Calu3 (cell line): ENCODE measurements at regions of chr1 and their contacts with region 1.

Region 1: DNA sequence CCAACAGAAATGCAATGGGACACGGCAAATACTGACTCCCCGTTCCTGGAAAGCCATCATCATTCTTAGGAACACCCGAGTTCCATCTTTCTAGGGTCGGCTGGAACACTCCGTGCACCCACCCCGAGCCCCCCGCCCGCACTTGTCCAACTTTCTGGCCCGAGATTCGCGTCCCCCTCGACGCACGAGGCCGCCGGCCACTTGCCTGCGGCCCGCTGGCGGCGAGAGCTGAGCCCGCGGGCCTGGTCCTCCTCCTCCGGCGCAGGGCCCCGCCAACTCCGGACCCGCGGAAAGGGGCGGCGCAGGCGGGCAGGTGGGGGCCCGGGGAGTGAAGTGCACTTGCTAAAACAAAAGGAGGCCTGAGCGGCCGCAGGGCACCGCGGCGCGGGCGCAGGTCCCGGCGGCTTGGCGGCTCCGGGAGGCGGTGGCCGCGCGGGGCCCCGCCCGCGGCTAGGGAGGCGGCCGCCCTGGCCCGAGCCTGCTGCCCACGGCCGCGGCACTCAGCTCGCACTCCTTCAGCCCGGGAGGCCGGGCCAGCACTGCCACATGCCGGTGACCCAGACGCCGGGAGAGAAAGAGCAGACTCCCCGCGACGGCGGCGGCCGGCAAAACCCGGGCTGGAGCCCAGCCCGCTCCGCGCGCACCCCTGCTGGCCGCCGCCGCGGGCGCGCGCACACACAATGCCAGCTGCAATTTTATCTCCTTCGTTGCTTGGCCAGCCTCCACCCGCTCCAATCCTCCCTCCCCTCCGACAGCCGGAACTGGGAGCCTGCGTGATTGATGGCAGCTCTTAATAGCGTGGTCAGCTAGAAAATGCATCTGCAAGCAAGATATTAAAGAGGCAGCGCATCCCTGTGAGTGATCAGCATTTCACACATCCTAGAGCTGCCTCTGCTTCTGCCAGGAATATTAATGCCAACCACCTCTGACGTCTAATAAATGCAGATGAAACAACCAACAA is 114.3 kb downstream of the RERE start:
- DNase-seq: peak; percentile 91
- H3K4me3 Mint-ChIP-seq: peak overlapping the region; percentile 84
- H3K27ac Mint-ChIP-seq: peak overlapping the region; percentile 93
- H3K4me1 Mint-ChIP-seq: peaks cover 10% of the 10 kb centered on the region
- H3K27me3 Mint-ChIP-seq: no peaks in the 10 kb centered on the region
- CTCF ChIP-seq: no peak

Region 2: GRCh38 chr1:8423650-8424538 is 279.2 kb before region 1 on chr1:
- CTCF ChIA-PET with region 1: no interaction called
- intact Hi-C with region 1: loop called (anchors 5 kb)
- DNase-seq: peak; percentile 36
- H3K4me3 Mint-ChIP-seq: no peak overlapping the region
- H3K27ac Mint-ChIP-seq: peak overlapping the region; percentile 79
- H3K4me1 Mint-ChIP-seq: peaks cover 15% of the 10 kb centered on the region
- H3K27me3 Mint-ChIP-seq: no peaks in the 10 kb centered on the region
- CTCF ChIP-seq: no peak

Region 3: GRCh38 chr1:8679395-8679800 is 23.7 kb before region 1 on chr1:
- CTCF ChIA-PET with region 1: no interaction called
- intact Hi-C with region 1: no loop called
- DNase-seq: no peak
- H3K4me3 Mint-ChIP-seq: no peak overlapping the region
- H3K27ac Mint-ChIP-seq: no peak overlapping the region
- H3K4me1 Mint-ChIP-seq: peaks cover 21% of the 10 kb centered on the region
- H3K27me3 Mint-ChIP-seq: no peaks in the 10 kb centered on the region
- CTCF ChIP-seq: no peak